AG04450 (cell line): ENCODE measurements at regions of chr14 and their contacts with region 1.

Region 1: DNA sequence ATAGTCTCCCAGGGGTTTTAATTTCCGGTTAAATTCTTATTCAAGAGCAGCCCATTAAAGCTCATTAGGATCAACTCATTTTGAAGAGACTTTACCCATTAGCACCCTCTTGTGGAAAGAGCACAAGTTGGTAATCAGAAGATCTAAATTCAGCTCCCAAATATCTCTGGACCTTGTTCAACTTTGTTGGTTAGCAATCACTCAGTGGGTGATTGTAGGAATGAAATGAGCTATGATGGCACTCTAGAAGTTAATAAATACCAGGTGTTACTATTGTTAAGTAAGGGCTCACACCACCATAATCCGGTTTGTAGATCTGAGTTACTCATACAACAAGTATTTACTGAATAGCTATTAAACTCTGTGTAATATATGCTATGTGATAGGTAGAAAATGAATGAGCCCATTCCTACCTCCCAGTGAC is 42.9 kb downstream of the TRIP11 start:
- DNase-seq: peak; percentile 26
- H3K4me3 ChIP-seq: no peak overlapping the region
- H3K27ac ChIP-seq: no peak overlapping the region
- H3K27me3 ChIP-seq: no peaks in the 10 kb centered on the region
- CTCF ChIP-seq: peak; percentile 78

Region 2: GRCh38 chr14:91919814-91920213 is 77.1 kb before region 1 on chr14:
- CTCF ChIA-PET with region 1: interaction called, 10 read pairs
- POLR2A ChIA-PET with region 1: no interaction called
- DNase-seq: no peak
- H3K4me3 ChIP-seq: no peak overlapping the region
- H3K27ac ChIP-seq: peak overlapping the region; percentile 31
- H3K27me3 ChIP-seq: no peaks in the 10 kb centered on the region
- CTCF ChIP-seq: no peak

Region 3: DNA sequence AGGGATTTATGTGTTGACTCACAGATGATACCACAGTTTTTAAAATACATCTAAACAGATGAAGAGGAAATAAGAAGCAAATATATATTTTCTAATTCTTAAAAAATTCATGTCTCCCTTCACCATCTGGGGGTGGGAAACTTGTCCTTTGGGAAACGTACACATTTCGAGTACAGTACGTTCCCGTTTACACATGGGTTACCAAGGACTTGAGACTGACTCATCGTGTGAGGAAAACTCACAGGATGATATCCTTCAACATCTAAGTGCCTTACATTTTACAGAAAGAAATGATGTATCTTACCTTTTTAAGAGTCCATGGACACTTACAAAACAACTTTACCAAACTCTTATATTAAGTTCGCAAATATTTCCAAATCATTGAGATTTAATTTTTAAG is 33.5 kb before region 1 on chr14:
- CTCF ChIA-PET with region 1: interaction called, 10 read pairs
- POLR2A ChIA-PET with region 1: interaction called, 10 read pairs
- DNase-seq: no peak
- H3K4me3 ChIP-seq: no peak overlapping the region
- H3K27ac ChIP-seq: no peak overlapping the region
- H3K27me3 ChIP-seq: no peaks in the 10 kb centered on the region
- CTCF ChIP-seq: no peak

Region 4: GRCh38 chr14:91985521-91986255 is 11.3 kb before region 1 on chr14:
- CTCF ChIA-PET with region 1: interaction called, 44 read pairs
- POLR2A ChIA-PET with region 1: no interaction called
- DNase-seq: no peak
- H3K4me3 ChIP-seq: no peak overlapping the region
- H3K27ac ChIP-seq: no peak overlapping the region
- H3K27me3 ChIP-seq: no peaks in the 10 kb centered on the region
- CTCF ChIP-seq: no peak

Region 5: GRCh38 chr14:92021523-92021922 is 24.6 kb after region 1 on chr14:
- CTCF ChIA-PET with region 1: interaction called, 11 read pairs
- POLR2A ChIA-PET with region 1: no interaction called
- DNase-seq: no peak
- H3K4me3 ChIP-seq: no peak overlapping the region
- H3K27ac ChIP-seq: no peak overlapping the region
- H3K27me3 ChIP-seq: no peaks in the 10 kb centered on the region
- CTCF ChIP-seq: no peak